ENCODE measurements at regions of chr6 and their contacts with region 1.

Region 1: DNA sequence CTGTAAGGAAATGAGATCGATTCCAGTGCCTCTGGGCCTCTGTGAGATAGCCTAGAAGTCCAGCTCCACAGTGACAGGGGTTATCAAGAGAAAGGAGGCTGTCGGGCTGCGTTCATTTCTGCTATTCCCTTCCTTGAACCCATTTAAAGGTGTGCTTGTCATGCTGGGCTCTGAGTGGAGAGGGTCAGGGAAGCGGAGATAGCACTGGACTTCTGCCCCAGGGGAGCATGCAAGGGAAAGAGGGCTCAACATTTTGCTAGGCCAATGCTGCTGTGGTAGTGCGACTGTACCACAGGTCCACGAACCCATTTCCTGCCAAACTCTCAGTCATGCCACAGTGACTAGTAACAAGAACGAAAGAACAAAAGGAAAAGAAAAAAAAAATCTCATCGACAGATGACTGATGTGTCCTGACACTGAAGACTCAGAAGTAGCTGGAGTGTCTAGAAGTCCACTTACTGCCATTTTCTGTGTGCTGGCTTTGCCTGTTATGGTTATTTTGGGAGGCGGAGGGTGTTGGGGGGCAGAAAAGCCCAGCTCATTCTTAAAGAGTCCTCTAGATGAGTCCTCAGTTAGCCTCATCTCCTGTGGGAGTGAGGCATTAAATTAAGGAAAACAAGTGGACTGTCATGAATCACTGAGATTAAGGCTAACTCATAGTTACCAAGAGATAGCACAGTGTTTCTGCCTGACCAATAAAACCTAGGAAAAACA is 8.1 kb downstream of the NEDD9 start:
- DNase-seq: peak; percentile 58
- H3K4me3 Mint-ChIP-seq: peak overlapping the region; percentile 65
- H3K27ac Mint-ChIP-seq: peak overlapping the region; percentile 87
- H3K4me1 Mint-ChIP-seq: peaks cover 80% of the 10 kb centered on the region
- H3K27me3 Mint-ChIP-seq: no peaks in the 10 kb centered on the region

Region 2: GRCh38 chr6:10951675-10952282 is 272.6 kb before region 1 on chr6:
- intact Hi-C with region 1: no loop called
- DNase-seq: no peak
- H3K4me3 Mint-ChIP-seq: no peak overlapping the region
- H3K27ac Mint-ChIP-seq: no peak overlapping the region
- H3K4me1 Mint-ChIP-seq: no peaks in the 10 kb centered on the region
- H3K27me3 Mint-ChIP-seq: peaks cover 11% of the 10 kb centered on the region

Region 3: GRCh38 chr6:11144393-11144851 is 80.0 kb before region 1 on chr6:
- intact Hi-C with region 1: loop called (anchors 2 kb)
- DNase-seq: peak; percentile 65
- H3K4me3 Mint-ChIP-seq: no peak overlapping the region
- H3K27ac Mint-ChIP-seq: no peak overlapping the region
- H3K4me1 Mint-ChIP-seq: peaks cover 16% of the 10 kb centered on the region
- H3K27me3 Mint-ChIP-seq: peaks cover 1% of the 10 kb centered on the region

Region 4: DNA sequence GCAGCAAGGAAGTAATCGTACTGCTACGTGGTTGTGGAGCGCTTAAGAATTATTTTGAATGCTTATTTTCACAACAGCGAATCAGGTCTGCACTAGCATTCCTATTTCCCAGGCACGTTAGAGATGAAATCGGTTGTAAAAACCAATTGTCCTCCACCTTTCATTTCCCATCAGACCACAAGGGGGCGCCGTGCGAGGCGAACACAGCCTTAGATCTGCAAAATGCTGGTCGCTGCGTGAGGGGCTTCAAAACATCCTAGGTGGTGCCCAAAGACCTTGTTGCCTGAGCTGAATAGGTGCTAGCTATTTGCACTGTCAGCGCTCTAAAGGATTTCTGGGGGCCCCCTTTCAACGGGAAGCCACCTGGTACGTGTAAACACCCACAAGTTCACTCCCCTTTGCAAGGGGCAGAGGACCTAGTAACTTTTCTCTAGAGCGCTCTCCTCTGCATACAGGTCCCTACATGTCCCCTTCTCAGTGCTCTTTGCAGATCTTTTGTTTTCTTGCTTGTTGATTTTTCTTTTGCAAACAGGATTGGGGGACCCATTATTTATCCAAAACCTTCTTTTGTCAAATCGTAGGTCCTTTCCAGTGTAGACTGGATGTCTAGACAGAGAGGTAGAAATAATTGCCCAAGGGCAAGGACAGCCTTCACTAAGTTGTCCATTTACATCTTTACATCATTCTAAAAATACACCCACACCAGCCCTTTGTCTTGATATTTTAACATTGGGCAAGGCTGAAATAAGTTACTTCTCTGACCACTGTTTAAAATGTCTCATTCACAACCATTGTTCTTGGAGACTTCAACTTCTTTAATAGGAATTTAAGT is 51.7 kb before region 1 on chr6:
- intact Hi-C with region 1: loop called (anchors 2 kb)
- DNase-seq: peak; percentile 47
- H3K4me3 Mint-ChIP-seq: no peak overlapping the region
- H3K27ac Mint-ChIP-seq: no peak overlapping the region
- H3K4me1 Mint-ChIP-seq: peaks cover 25% of the 10 kb centered on the region
- H3K27me3 Mint-ChIP-seq: peaks cover 3% of the 10 kb centered on the region

Region 5: GRCh38 chr6:11202513-11203305 is 21.7 kb before region 1 on chr6:
- intact Hi-C with region 1: loop called (anchors 1 kb)
- DNase-seq: peak; percentile 43
- H3K4me3 Mint-ChIP-seq: peak overlapping the region; percentile 54
- H3K27ac Mint-ChIP-seq: peak overlapping the region; percentile 92
- H3K4me1 Mint-ChIP-seq: peaks cover 86% of the 10 kb centered on the region
- H3K27me3 Mint-ChIP-seq: no peaks in the 10 kb centered on the region

Region 6: DNA sequence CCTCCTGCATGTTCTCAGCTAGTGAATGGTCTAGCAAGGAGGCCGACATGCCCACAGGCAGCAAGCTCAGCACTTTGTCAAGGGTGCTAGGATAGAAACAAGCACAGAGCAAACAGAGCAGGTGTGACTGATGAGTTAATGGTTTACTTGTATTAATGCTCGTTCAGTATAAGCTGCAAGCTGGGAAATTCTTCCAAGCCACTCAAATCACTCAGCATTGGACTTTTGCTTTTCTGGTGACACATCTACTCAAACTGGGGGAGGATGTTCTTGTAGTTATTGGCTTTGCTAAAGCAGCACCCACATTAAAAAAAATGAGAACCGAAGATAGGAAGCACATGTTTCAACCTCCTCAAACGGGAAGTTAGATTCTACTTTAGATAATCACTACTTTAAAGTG is 51.2 kb after region 1 on chr6:
- intact Hi-C with region 1: loop called (anchors 2 kb)
- DNase-seq: no peak
- H3K4me3 Mint-ChIP-seq: peak overlapping the region; percentile 0
- H3K27ac Mint-ChIP-seq: peak overlapping the region; percentile 41
- H3K4me1 Mint-ChIP-seq: peaks cover 43% of the 10 kb centered on the region
- H3K27me3 Mint-ChIP-seq: no peaks in the 10 kb centered on the region

Region 7: DNA sequence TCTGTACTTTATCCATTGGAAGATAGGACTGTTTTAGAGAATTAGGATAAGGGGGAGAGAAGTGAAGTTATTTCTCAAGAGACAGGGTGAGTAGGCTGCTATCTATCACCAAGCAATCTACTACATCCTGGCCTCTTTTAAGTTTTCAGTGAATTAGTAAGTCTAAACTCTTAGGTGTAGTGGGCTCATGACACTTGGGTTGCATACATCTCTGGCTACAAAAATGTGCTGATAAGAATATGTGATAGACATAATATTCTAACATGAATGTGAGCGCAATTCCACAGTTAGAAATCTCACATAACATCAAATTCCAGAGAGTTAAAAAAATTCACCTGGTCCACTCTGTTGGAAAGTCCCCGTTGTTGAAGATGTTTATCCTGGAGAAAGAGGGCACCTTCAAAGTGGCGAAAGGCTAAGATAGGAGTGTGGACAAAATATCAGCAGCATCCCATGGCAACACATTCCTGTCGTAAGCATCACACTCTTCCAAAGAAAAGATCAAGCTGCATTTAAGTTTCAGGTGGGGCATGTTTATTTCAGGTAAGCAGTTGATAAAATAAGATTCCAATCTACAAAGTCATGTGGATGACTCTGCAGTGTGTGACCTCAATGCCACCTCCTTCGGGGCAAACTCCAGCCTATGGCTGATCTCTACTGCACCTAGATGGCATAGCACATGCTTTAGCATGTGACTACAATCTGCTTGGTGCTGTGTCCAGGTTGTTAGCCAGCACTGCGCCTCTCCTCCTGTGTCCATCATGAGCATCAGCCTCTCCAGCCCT is 119.7 kb after region 1 on chr6:
- intact Hi-C with region 1: loop called (anchors 1 kb)
- DNase-seq: no peak
- H3K4me3 Mint-ChIP-seq: peak overlapping the region; percentile 4
- H3K27ac Mint-ChIP-seq: peak overlapping the region; percentile 61
- H3K4me1 Mint-ChIP-seq: peaks cover 90% of the 10 kb centered on the region
- H3K27me3 Mint-ChIP-seq: no peaks in the 10 kb centered on the region

Region 8: DNA sequence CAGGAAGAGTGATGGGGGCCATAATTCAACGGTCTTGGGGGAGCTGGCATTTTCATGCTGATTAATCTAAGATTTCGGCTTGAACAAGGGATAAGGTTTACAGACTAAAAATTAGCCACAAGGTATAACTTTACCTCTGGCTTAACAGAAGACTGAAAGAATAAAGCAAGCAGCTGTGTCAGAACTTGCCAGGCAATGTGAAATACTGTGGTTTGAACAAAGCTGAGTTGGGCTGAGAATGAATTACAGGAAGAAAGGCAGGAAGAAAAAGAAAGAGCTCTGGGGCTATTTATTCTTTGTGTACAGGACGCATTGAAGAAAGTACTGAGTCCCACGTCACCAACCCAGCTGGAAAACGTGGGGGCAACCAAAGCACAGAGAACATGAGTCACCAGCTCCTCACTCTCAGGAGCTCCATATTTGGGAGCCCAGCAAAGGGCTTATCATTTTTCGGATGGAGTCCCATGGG is 129.5 kb after region 1 on chr6:
- intact Hi-C with region 1: loop called (anchors 1 kb)
- DNase-seq: peak; percentile 58
- H3K4me3 Mint-ChIP-seq: peak overlapping the region; percentile 74
- H3K27ac Mint-ChIP-seq: peak overlapping the region; percentile 93
- H3K4me1 Mint-ChIP-seq: peaks cover 90% of the 10 kb centered on the region
- H3K27me3 Mint-ChIP-seq: no peaks in the 10 kb centered on the region

Region 9: DNA sequence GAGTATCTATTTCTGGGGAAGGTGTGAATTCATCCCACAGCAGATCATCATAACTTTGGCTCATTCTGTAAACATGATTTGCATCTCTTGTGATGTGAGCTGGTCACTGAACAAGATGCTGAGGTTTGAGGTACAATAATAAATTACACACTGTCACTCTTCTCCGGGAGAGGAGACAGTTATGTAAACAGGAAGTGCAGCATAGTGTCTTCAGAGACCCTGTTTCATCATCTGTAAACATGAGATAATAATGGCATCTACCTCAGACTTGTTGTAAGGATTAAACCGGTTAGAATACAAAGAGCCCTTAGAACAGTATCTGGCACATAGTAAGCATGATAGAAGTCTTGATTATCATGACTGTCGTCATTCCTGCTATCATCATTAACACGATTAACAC is 1978.7 kb after region 1 on chr6:
- intact Hi-C with region 1: no loop called
- DNase-seq: no peak
- H3K4me3 Mint-ChIP-seq: no peak overlapping the region
- H3K27ac Mint-ChIP-seq: no peak overlapping the region
- H3K4me1 Mint-ChIP-seq: no peaks in the 10 kb centered on the region
- H3K27me3 Mint-ChIP-seq: peaks cover 6% of the 10 kb centered on the region

Measured in activated T-helper 1 cell treated with anti-CD3 and anti-CD28 coated beads, Interleukin-12 subunit alpha, Interleukin-12 subunit beta, Interleukin-2, Interleukin-4 antibody, amounts not matched to agents 30 ng/mL and 10 ng/mL and 1 ng/mL, durations not matched to agents 14 hours and 24 hours and 36 hours (primary cell).